ENCODE measurements at regions of chr10 and their contacts with region 1.

Region 1: GRCh38 chr10:59913547-59914237 is 7.3 kb upstream of the CCDC6 start:
- DNase-seq: no peak
- H3K4me3 ChIP-seq: no peak overlapping the region
- H3K27ac ChIP-seq: no peak overlapping the region
- H3K4me1 ChIP-seq: peaks cover 0 to 5% of the 10 kb centered on the region in 2 donors
- H3K27me3 ChIP-seq: no peaks in the 10 kb centered on the region
- CTCF ChIP-seq: no peak
- POLR2A ChIP-seq: no peak

Region 2: GRCh38 chr10:59954296-59954695 is 40.6 kb after region 1 on chr10:
- intact Hi-C with region 1: no loop called
- DNase-seq: no peak
- H3K4me3 ChIP-seq: no peak overlapping the region
- H3K27ac ChIP-seq: no peak overlapping the region
- H3K4me1 ChIP-seq: no peaks in the 10 kb centered on the region
- H3K27me3 ChIP-seq: no peaks in the 10 kb centered on the region
- CTCF ChIP-seq: no peak
- POLR2A ChIP-seq: no peak

Region 3: DNA sequence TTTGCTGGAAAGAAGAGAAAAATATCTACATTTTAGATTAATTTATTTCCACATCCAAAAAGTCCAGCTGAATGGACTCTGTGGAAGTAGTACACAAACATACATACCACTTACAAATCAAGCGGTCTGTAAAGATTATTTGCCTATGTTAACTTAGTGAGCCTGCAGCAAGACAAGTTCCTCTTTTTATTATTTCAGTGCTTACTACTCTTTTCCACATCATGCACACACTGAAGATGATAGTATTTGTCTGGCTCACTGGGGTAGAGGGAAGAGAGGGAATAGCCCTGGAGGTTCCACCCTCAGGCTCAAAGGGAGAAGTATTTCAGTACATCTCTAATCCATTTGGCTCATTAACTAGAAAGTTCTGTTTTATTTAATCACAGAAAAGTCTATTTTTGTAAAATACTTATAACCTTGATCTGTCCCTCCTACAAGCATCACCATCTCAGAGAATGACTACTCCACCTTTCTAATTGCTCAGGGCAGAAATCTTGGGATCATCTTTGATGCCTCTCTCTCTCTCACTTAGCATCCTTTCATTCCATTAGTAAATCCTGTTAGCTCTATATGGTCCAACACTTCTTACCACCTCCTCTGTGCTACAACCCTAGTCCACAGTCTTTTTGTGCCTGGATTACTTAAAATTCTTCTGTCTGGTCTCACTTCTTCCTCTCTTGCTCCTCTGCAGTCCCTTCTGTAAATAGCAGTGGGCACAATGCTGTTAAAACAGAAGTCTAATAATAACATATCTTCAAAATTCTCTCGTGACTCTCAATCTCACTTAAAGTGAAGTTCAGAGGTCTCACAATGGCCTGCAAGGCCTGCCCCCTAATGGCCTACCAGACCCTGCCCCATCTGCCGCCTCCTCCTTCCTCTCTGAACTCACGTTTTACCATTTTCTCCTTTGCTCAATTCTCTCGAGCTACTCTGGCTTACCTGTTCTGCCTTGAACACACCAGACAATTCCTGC is 57.0 kb after region 1 on chr10:
- intact Hi-C with region 1: no loop called
- DNase-seq: no peak
- H3K4me3 ChIP-seq: no peak overlapping the region
- H3K27ac ChIP-seq: no peak overlapping the region
- H3K4me1 ChIP-seq: no peaks in the 10 kb centered on the region
- H3K27me3 ChIP-seq: no peaks in the 10 kb centered on the region
- CTCF ChIP-seq: no peak
- POLR2A ChIP-seq: no peak

Region 4: DNA sequence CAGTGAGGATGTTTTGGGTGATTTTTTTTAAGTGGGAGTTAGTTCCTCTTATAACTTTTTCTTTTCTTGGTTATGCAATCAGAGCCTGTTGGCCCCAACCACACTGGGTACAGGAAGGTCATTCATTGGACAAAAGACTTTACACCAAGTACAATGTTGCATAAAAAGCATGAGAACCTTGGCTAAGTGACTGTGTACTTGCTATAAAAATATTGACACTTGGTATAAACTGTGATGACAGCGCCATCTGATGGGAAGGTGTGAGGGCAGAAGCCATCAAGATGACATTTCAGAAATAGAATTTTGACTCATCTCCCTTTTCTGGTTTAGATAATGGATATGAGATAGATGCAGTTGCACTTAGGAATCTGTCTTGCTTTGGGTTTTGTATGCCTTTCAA is 119.0 kb after region 1 on chr10:
- intact Hi-C with region 1: loop called in 1 of 2 experiments (anchors 10 kb)
- DNase-seq: peak; percentile 32 to 78 (median 48)
- H3K4me3 ChIP-seq: no peak overlapping the region
- H3K27ac ChIP-seq: no peak overlapping the region
- H3K4me1 ChIP-seq: no peaks in the 10 kb centered on the region
- H3K27me3 ChIP-seq: no peaks in the 10 kb centered on the region
- CTCF ChIP-seq: peak; percentile 12 to 52 (median 45)
- POLR2A ChIP-seq: no peak

Measured in adrenal gland (tissue), 19 donors.